Activated T-helper 2 cell treated with anti-CD3 and anti-CD28 coated beads, Interferon-gamma antibody, Interleukin-2, Interleukin-4, amounts not matched to agents 10 μg/mL and 5 μg/mL and 100 μg/mL, durations not matched to agents 14 hours and 24 hours and 36 hours (primary cell): ENCODE measurements at regions of chr3 and their contacts with region 1.

Region 1: DNA sequence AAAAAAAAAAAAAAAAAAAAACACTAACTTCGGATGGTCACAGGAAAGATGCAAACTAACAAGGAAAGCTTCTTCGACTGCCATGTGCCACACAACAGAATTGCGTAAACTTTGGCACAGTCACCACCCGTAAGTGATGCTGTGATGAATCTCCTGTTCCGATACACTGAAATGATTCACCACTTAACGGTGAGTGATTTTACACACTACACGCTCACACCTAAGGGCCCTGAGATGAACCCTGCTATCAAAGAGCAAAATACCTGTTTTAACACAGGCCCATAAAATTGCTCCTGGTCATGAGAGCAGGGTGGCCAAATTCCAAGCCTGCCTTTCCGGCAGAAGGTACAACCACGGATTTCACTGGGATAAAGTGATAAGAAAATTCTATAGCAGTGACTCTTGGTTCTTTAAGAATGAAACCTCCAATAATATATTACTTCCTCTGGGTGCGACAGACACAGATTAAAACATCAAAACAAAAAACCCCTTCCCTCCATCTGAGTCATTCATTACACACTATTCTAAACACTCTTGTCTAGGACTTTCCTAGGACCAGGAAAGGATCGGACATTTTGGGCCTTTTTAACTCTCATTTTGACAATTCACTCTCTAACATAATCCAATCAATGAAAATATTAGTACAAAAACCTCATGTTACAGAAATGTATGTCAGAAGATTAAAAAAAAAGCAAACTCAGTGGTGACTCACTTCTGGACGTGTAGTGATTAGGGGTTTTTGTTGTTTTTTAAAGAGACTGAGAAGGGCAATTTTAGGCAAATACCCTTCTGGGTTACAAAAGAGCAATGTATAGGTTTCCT is 28.3 kb downstream of the LRIG1 start:
- DNase-seq: peak; percentile 41
- H3K4me3 Mint-ChIP-seq: peak overlapping the region; percentile 67
- H3K27ac Mint-ChIP-seq: no peak overlapping the region
- H3K4me1 Mint-ChIP-seq: peaks cover 66% of the 10 kb centered on the region
- H3K27me3 Mint-ChIP-seq: no peaks in the 10 kb centered on the region

Region 2: DNA sequence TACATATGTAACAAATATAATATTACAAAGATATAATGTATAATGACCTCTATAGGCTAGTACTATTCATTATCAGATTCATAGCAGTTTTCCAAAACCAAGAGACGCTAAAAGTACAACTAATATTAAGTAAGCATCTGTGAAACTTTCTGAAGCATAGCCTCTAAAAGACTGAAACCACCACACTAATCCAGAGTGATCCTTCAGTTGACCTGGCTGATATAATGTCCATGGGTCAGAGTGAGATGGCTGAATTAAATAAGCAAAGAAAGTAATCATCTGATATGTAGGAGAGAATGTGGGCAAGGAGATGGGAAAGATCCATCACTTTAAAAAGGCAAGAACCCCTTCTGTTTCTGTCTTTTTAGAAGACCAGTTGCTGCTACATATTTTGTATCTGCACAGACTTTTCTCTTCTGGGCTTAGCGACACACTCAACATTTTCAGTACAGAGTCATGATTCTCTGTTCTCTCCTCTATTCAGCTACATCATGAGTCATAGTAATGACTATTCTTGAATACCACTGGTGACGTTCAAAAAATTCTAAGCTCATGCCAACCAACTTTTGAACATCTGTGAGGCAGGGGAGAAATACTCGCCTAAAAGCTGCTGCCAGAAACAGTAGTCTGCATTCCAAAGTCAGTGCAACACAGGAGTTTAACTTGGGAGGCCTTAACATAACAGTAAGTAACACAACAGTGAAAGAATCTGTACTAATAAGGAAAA is 583.4 kb before region 1 on chr3:
- intact Hi-C with region 1: no loop called
- DNase-seq: no peak
- H3K4me3 Mint-ChIP-seq: no peak overlapping the region
- H3K27ac Mint-ChIP-seq: no peak overlapping the region
- H3K4me1 Mint-ChIP-seq: no peaks in the 10 kb centered on the region
- H3K27me3 Mint-ChIP-seq: no peaks in the 10 kb centered on the region

Region 3: GRCh38 chr3:66033241-66034138 is 439.0 kb before region 1 on chr3:
- intact Hi-C with region 1: loop called (anchors 5 kb)
- DNase-seq: no peak
- H3K4me3 Mint-ChIP-seq: no peak overlapping the region
- H3K27ac Mint-ChIP-seq: peak overlapping the region; percentile 80
- H3K4me1 Mint-ChIP-seq: peaks cover 15% of the 10 kb centered on the region
- H3K27me3 Mint-ChIP-seq: peaks cover 24% of the 10 kb centered on the region

Region 4: GRCh38 chr3:66302288-66302687 is 170.2 kb before region 1 on chr3:
- intact Hi-C with region 1: loop called (anchors 2 kb)
- DNase-seq: no peak
- H3K4me3 Mint-ChIP-seq: peak overlapping the region; percentile 37
- H3K27ac Mint-ChIP-seq: peak overlapping the region; percentile 94
- H3K4me1 Mint-ChIP-seq: peaks cover 55% of the 10 kb centered on the region
- H3K27me3 Mint-ChIP-seq: no peaks in the 10 kb centered on the region

Region 5: DNA sequence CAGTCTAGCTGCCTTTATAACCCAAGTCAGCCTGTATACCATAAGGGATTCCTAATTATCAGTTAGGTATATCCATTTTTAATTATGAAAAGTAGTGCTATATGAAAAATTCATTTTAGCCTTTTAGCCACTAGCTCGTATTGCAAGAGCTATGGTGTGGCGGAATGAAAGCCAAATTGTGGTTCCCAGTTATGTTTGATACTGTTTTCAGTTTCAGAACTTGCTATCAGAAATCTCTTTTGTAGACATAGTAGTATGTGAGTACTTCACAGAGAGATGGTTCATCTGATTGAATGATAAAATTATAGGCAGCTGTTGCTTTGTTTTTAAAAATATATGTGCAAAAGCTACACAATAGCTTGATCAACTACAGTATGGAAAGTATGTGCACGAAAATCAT is 117.1 kb before region 1 on chr3:
- intact Hi-C with region 1: loop called (anchors 2 kb)
- DNase-seq: no peak
- H3K4me3 Mint-ChIP-seq: no peak overlapping the region
- H3K27ac Mint-ChIP-seq: no peak overlapping the region
- H3K4me1 Mint-ChIP-seq: peaks cover 32% of the 10 kb centered on the region
- H3K27me3 Mint-ChIP-seq: peaks cover 5% of the 10 kb centered on the region

Region 6: GRCh38 chr3:66495646-66496045 is 23.1 kb after region 1 on chr3:
- intact Hi-C with region 1: loop called (anchors 1 kb)
- DNase-seq: no peak
- H3K4me3 Mint-ChIP-seq: peak overlapping the region; percentile 55
- H3K27ac Mint-ChIP-seq: peak overlapping the region; percentile 77
- H3K4me1 Mint-ChIP-seq: peaks cover 80% of the 10 kb centered on the region
- H3K27me3 Mint-ChIP-seq: no peaks in the 10 kb centered on the region

Region 7: GRCh38 chr3:66500576-66501482 is 28.3 kb after region 1 on chr3 and contains the start of gene LRIG1:
- intact Hi-C with region 1: loop called (anchors 1 kb)
- DNase-seq: peak; percentile 98
- H3K4me3 Mint-ChIP-seq: peak within 1 kb of the TSS; percentile 96
- H3K27ac Mint-ChIP-seq: peak within 1 kb of the TSS; percentile 84
- H3K4me1 Mint-ChIP-seq: peaks cover 59% of the 10 kb centered on the region
- H3K27me3 Mint-ChIP-seq: peaks cover 27% of the 10 kb centered on the region
- total RNA-seq, gene LRIG1: 42.5 and 47.9 TPM in 2 replicates

Region 8: GRCh38 chr3:66593964-66594363 is 121.4 kb after region 1 on chr3:
- intact Hi-C with region 1: no loop called
- DNase-seq: no peak
- H3K4me3 Mint-ChIP-seq: no peak overlapping the region
- H3K27ac Mint-ChIP-seq: no peak overlapping the region
- H3K4me1 Mint-ChIP-seq: no peaks in the 10 kb centered on the region
- H3K27me3 Mint-ChIP-seq: peaks cover 28% of the 10 kb centered on the region